Activated CD4-positive, alpha-beta T cell treated with anti-CD3 and anti-CD28 coated beads, Interleukin-2, amount 10 ng/mL, durations not matched to agents 24 days and 14 days (primary cell): ENCODE measurements at regions of chr15 and their contacts with region 1.

Region 1: GRCh38 chr15:85618956-85619491 is 175.7 kb downstream of the KLHL25 start:
- DNase-seq: peak; percentile 83
- H3K4me3 Mint-ChIP-seq: no peak overlapping the region
- H3K27ac Mint-ChIP-seq: no peak overlapping the region
- H3K4me1 Mint-ChIP-seq: peaks cover 31% of the 10 kb centered on the region
- H3K27me3 Mint-ChIP-seq: no peaks in the 10 kb centered on the region

Region 2: GRCh38 chr15:85407804-85408746 is 210.9 kb before region 1 on chr15:
- intact Hi-C with region 1: loop called (anchors 5 kb)
- DNase-seq: peak; percentile 76
- H3K4me3 Mint-ChIP-seq: peak overlapping the region; percentile 68
- H3K27ac Mint-ChIP-seq: peak overlapping the region; percentile 95
- H3K4me1 Mint-ChIP-seq: peaks cover 65% of the 10 kb centered on the region
- H3K27me3 Mint-ChIP-seq: no peaks in the 10 kb centered on the region

Region 3: DNA sequence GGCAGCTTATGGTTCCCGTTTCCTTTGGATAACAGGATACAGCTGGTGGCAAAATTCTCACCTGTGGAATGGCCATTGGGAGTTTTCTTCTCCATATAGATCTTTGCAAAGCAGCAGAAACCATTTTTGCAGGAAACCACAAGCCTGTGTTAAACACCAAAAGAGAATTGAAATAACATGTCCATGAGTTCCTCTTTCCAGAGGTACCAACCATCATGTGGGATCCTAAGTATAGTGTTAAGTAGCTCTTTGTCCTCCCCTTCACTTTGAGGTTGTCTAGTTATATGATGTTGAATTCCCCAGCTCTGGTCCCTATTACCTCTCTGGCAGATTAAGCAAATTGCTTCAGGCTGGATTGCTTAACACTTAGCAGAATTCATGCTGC is 143.7 kb before region 1 on chr15:
- intact Hi-C with region 1: no loop called
- DNase-seq: no peak
- H3K4me3 Mint-ChIP-seq: no peak overlapping the region
- H3K27ac Mint-ChIP-seq: no peak overlapping the region
- H3K4me1 Mint-ChIP-seq: peaks cover 37% of the 10 kb centered on the region
- H3K27me3 Mint-ChIP-seq: no peaks in the 10 kb centered on the region

Region 4: GRCh38 chr15:85543741-85544155 is 75.3 kb before region 1 on chr15:
- intact Hi-C with region 1: loop called (anchors 2 kb)
- DNase-seq: peak; percentile 82
- H3K4me3 Mint-ChIP-seq: peak overlapping the region; percentile 74
- H3K27ac Mint-ChIP-seq: peak overlapping the region; percentile 64
- H3K4me1 Mint-ChIP-seq: peaks cover 75% of the 10 kb centered on the region
- H3K27me3 Mint-ChIP-seq: no peaks in the 10 kb centered on the region

Region 5: GRCh38 chr15:85630311-85630710 is 11.3 kb after region 1 on chr15:
- intact Hi-C with region 1: no loop called
- DNase-seq: no peak
- H3K4me3 Mint-ChIP-seq: no peak overlapping the region
- H3K27ac Mint-ChIP-seq: no peak overlapping the region
- H3K4me1 Mint-ChIP-seq: peaks cover 34% of the 10 kb centered on the region
- H3K27me3 Mint-ChIP-seq: no peaks in the 10 kb centered on the region

Region 6: GRCh38 chr15:85646538-85647091 is 27.6 kb after region 1 on chr15:
- intact Hi-C with region 1: loop called (anchors 2 kb)
- DNase-seq: peak; percentile 77
- H3K4me3 Mint-ChIP-seq: peak overlapping the region; percentile 52
- H3K27ac Mint-ChIP-seq: peak overlapping the region; percentile 94
- H3K4me1 Mint-ChIP-seq: peaks cover 34% of the 10 kb centered on the region
- H3K27me3 Mint-ChIP-seq: no peaks in the 10 kb centered on the region

Region 7: GRCh38 chr15:85689729-85690128 is 70.7 kb after region 1 on chr15:
- intact Hi-C with region 1: loop called (anchors 1 kb)
- DNase-seq: peak; percentile 91
- H3K4me3 Mint-ChIP-seq: peak overlapping the region; percentile 93
- H3K27ac Mint-ChIP-seq: peak overlapping the region; percentile 99
- H3K4me1 Mint-ChIP-seq: peaks cover 65% of the 10 kb centered on the region
- H3K27me3 Mint-ChIP-seq: no peaks in the 10 kb centered on the region